ENCODE measurements at regions of chr17 and their contacts with region 1.

Region 1: DNA sequence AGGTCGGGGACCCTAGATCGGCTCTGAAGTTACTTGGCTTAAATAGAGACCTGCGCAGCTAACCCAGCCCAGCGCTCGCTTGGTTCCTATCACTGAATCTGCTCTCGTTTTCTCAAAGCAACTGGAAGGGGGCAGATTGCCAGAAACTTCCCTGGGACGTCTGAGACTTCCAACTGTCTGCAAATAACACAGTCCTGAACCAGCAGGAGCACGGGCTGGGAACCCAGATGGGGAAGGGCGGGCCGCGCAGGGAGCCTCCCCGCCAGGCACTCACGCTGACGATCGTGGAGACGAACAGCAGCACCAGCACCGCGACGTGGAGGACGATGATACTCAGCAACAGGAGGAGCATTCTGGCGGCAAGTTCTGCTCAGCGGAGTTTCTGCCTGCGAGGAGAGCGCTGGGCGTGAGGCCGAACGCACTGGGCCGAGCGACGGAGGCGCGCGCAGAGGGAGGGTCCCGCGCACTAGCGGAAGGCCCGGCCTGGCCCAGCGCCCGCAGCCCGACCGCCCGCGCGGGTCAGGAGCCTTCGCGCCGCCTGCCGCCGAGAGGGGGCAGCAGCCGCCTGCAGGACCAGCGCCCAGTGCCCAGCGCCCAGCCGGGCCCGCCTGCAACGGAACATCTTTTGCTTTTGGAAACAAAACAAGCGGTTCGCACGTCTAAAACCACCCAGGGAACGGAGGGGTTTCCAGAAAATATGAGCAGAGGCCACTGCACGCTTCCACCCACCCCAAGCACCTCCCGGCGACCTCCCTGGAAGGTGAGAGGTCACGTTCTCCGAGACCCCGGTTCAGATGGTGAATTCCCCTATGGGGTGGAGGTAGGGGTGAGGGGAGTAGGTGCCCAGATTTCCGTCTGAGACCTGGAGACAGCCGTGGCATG is 4.5 kb downstream of the PMP22 start:
- DNase-seq: peak; percentile 61 to 95 (median 88)

Region 2: GRCh38 chr17:15038656-15039055 is 222.0 kb before region 1 on chr17:
- intact Hi-C with region 1: no loop called
- DNase-seq: no peak

Region 3: GRCh38 chr17:15436473-15437302 is 176.1 kb after region 1 on chr17:
- intact Hi-C with region 1: loop called (anchors 5 kb)
- DNase-seq: peak in 41 of 42 donors; percentile 17 to 86 (median 63)

Region 4: GRCh38 chr17:15502369-15503112 is 241.9 kb after region 1 on chr17:
- intact Hi-C with region 1: loop called (anchors 2 kb)
- DNase-seq: peak; percentile 78 to 95 (median 89)